Mammary epithelial cell (primary cell): ENCODE measurements at regions of chr20 and their contacts with region 1.

Region 1: GRCh38 chr20:50561379-50562078 is 51.3 kb downstream of the PTPN1 start:
- DNase-seq: peak; percentile 85
- H3K4me3 ChIP-seq: no peak overlapping the region
- H3K27ac ChIP-seq: peak overlapping the region; percentile 78
- H3K4me1 ChIP-seq: peaks cover 38% of the 10 kb centered on the region
- H3K27me3 ChIP-seq: no peaks in the 10 kb centered on the region
- CTCF ChIP-seq: no peak

Region 2: GRCh38 chr20:50528804-50529351 is 32.7 kb before region 1 on chr20:
- CTCF ChIA-PET with region 1: no interaction called
- dilution Hi-C with region 1: loop called (anchors 5 kb)
- in situ Hi-C with region 1: no loop called
- intact Hi-C with region 1: no loop called
- DNase-seq: no peak
- H3K4me3 ChIP-seq: no peak overlapping the region
- H3K27ac ChIP-seq: no peak overlapping the region
- H3K4me1 ChIP-seq: peaks cover 8% of the 10 kb centered on the region
- H3K27me3 ChIP-seq: no peaks in the 10 kb centered on the region
- CTCF ChIP-seq: no peak

Region 3: DNA sequence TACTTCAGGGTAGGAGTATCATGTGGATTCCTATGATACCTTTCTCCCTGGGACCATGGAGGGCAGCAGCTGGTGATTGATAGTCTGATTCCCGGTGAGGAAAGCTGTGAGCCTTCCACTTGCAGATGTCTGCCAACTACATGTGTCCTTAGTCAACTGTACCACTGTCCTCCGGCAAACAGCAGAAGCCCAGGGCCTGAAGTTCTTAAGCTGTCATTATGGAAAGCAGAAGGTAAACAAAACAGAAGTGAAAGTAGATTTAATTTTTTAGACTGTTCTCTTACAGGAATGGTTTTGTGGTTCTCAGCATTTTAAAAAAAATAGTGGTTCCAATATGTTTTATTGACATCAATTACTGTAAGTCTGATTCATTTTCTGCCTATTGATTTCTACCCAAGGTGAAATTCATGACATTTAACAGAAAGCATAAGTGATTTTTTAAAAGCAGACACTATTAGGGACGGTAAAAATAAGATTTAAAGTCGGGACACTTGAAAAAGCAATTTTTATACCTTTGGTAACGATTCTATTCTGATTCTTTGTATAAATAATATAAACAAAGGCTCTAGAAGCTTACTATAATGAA is 14.7 kb before region 1 on chr20:
- CTCF ChIA-PET with region 1: no interaction called
- dilution Hi-C with region 1: no loop called
- in situ Hi-C with region 1: no loop called
- intact Hi-C with region 1: loop called (anchors 2 kb)
- DNase-seq: no peak
- H3K4me3 ChIP-seq: no peak overlapping the region
- H3K27ac ChIP-seq: no peak overlapping the region
- H3K4me1 ChIP-seq: peaks cover 7% of the 10 kb centered on the region
- H3K27me3 ChIP-seq: no peaks in the 10 kb centered on the region
- CTCF ChIP-seq: no peak

Region 4: DNA sequence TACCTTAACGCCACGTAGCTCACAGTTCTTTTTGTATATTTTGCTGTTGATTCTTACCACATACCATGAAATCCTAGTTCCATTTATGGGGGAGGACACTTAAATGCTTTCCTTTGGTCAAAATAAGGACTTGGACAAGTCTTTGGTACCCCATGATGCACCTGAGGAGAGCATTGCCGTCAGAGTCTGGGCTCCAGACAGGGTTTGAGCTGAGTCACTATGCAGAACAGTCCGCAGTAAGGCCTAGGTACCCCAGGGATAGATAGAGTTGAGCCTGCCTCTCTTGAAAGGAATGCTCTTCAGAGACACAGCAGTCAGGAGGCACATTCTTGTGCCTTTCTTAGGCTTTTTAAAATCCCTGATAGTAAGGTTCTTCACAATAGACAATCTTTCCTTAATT is 175.8 kb after region 1 on chr20:
- CTCF ChIA-PET with region 1: no interaction called
- dilution Hi-C with region 1: no loop called
- in situ Hi-C with region 1: no loop called
- intact Hi-C with region 1: no loop called
- DNase-seq: no peak
- H3K4me3 ChIP-seq: no peak overlapping the region
- H3K27ac ChIP-seq: no peak overlapping the region
- H3K4me1 ChIP-seq: peaks cover 13% of the 10 kb centered on the region
- H3K27me3 ChIP-seq: no peaks in the 10 kb centered on the region
- CTCF ChIP-seq: no peak